ENCODE measurements at regions of chr11 and their contacts with region 1.

Region 1: GRCh38 chr11:130403271-130403804 is 25.1 kb downstream of the ADAMTS8 start:
- DNase-seq: no peak
- CTCF ChIP-seq: no peak

Region 2: GRCh38 chr11:130055617-130056016 is 347.7 kb before region 1 on chr11:
- in situ Hi-C with region 1: no loop called
- DNase-seq: no peak
- CTCF ChIP-seq: no peak

Region 3: DNA sequence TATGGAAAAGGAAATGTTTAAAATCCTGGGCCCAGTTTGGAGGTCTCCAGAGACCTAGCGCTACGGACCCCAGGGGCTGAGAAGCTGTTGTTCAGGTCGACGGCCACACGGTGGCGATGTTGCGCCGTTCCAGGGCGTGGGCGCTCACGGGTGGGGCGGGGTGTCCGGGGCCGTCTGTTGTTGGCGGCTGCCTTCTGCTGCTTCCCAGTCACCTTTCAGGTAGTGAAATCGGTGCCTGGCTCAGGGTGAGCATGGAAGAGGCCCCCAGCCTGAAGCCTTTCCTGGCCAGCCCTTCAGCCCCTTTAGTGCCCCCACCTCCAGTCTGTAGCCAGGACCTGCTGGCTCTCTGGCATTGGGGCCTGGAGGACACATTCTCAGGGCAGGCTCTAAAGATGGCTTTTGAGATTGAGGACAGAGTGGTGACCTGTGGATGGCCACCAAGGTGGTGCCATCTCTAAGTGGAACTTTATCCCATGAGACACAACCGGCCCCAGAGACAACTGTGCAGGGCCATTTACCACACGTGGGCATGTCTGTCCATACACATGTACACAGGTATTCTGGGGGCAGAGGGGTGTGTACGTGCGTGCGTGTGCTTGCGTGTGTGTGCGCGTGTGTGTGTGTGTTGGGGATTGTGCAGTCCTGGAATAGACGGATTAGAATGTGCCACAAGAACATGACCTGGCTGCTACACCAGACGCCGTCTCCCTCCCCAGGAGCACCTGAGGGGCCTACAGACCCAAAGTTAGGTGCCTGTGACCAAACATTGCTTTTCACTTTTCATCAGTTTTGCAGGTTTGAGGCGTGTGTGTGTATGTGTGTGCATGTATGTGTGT is 190.0 kb before region 1 on chr11:
- in situ Hi-C with region 1: loop called (anchors 25 kb)
- DNase-seq: peak; percentile 86
- CTCF ChIP-seq: peak; percentile 94

Measured in GM13977 (cell line).